Heart left ventricle (tissue), 16 donors: ENCODE measurements at regions of chr20 and their contacts with region 1.

Region 1: DNA sequence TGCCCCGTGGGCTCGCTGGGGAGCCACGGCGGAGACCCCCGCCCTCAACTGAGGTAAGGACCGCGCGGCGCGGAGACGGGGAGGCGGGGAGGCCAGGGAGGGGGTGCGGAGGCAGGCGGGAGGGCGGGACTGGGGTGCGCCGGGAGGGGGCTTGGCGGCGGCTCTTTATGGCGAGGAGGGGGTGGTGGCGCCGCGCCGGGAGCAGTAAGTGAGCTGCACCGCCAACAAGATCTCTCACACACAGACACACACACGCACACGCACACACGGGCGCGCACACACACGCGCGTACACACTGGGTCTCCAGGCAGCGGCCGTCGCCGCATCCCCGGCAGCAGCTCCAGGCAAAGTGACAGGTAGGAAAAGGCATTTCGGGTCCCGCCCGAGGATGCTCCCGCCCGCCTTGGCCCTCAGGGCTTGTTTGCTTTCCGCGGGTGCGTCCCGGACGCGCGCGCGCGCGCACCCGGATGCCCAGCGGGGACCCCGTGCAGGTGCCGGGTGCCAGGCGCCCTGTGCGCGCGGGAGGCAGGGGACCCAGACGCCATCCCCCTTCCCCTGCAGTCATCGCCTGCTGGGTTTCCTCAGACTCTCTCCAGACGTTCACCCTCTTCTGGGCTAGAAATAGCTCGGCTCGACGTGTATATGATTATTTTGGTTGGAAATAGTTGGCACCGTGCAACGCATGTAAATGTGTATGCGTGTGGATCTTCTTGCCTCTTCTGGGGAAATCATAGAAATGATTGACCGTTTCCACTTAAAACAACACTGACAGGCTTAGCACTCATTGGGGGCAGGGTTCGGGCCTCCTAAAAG is at the start of gene PLCB4:
- DNase-seq: peak; percentile 58 to 75 (median 64)
- ATAC-seq: peak in 3 of 4 donors; percentile 38 to 55 (median 41)
- H3K4me3 ChIP-seq: peak within 1 kb of the TSS; percentile 68 to 95 (median 90)
- H3K27ac ChIP-seq: peak within 1 kb of the TSS; percentile 68 to 98 (median 94)
- H3K4me1 ChIP-seq: peaks cover 0 to 50% (median 34%) of the 10 kb centered on the region in 12 donors
- H3K27me3 ChIP-seq: peaks cover 0 to 22% (median 0%) of the 10 kb centered on the region in 9 donors
- CTCF ChIP-seq: no peak
- POLR2A ChIP-seq: peak in 1 of 2 donors; percentile 38
- total RNA-seq, gene PLCB4: 14.7 to 31.8 (median 18.6) TPM

Region 2: DNA sequence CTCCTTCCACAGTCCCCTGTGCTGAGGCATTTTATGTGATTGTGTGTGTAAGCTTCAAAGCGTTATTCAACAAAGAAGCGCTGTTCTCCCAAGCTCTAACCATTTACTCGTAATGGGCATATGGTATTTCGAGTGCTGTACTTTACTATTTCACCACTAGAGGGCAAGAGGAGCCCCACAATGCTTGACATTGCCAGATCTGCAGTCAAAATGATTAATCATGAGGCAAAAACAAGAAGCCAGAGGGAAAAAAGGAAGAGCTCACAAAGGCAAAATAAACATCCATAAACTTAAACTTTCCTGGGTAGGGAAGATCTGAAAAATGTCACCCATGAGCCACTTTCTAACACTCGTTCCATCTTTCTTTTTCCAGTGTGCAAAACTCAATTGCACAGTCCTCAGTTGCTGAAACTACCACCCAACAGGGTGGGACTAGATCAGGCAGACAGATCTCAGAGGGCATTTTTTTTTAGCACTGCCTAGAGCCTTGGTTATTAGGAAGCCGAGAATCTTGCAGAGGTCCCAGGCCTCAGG is 215.2 kb before region 1 on chr20:
- intact Hi-C with region 1: loop called in 9 of 10 experiments (anchors 1 to 10 kb)
- DNase-seq: peak in 2 of 5 donors; percentile 20 to 29
- ATAC-seq: peak; percentile 56 to 86 (median 82)
- H3K4me3 ChIP-seq: peak overlapping the region in 9 of 12 donors; percentile 6 to 39 (median 21)
- H3K27ac ChIP-seq: peak overlapping the region; percentile 34 to 81 (median 70)
- H3K4me1 ChIP-seq: peaks cover 0 to 25% (median 15%) of the 10 kb centered on the region in 12 donors
- H3K27me3 ChIP-seq: no peaks in the 10 kb centered on the region
- CTCF ChIP-seq: peak; percentile 78 to 93 (median 89)
- POLR2A ChIP-seq: no peak

Region 3: GRCh38 chr20:8865636-8866035 is 203.4 kb before region 1 on chr20:
- intact Hi-C with region 1: no loop called
- DNase-seq: no peak
- ATAC-seq: no peak
- H3K4me3 ChIP-seq: no peak overlapping the region
- H3K27ac ChIP-seq: no peak overlapping the region
- H3K4me1 ChIP-seq: peaks cover 0 to 12% (median 0%) of the 10 kb centered on the region in 12 donors
- H3K27me3 ChIP-seq: no peaks in the 10 kb centered on the region
- CTCF ChIP-seq: no peak
- POLR2A ChIP-seq: no peak

Region 4: GRCh38 chr20:8996817-8997512 is 72.1 kb before region 1 on chr20:
- intact Hi-C with region 1: loop called in 1 of 10 experiments (anchors 10 kb)
- DNase-seq: no peak
- ATAC-seq: no peak
- H3K4me3 ChIP-seq: no peak overlapping the region
- H3K27ac ChIP-seq: no peak overlapping the region
- H3K4me1 ChIP-seq: peaks cover 0 to 15% (median 8%) of the 10 kb centered on the region in 12 donors
- H3K27me3 ChIP-seq: no peaks in the 10 kb centered on the region
- CTCF ChIP-seq: no peak
- POLR2A ChIP-seq: no peak

Region 5: DNA sequence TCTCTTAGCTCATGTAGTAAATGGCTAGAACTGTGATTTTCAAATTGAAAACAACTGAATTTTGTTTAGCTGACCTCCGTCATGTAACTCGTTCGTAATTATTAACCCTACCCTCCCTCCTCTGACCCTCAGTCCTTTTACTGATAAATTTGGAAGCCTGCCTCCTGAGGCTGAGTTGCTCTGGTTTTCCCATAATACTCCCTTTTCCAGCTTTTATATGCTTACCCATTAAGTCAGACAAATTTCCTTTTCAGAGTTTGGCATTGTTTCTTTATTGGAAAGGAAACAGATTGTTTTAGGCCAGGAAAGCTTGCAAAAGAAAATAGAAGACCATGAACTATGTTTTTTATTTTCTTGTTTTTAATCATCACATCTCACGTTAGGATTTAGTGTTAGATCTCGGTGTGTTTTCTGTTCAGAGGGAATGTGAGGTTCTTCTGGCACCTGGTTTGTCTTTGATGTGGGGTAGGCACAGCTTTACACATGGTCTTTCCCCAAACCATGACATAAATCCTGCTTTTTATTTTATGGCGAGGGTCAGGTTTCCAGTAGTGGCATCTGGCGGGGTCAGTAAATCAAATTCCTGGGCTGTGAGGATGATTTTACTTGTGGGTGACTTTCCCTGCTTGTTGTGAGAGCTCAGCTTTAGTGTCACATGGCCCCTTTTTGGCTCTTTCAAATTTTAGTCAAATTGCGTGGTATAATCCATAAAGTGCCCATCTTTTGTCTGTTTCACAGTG is 24.3 kb after region 1 on chr20:
- intact Hi-C with region 1: no loop called
- DNase-seq: no peak
- ATAC-seq: peak in 3 of 4 donors; percentile 46 to 80 (median 52)
- H3K4me3 ChIP-seq: peak overlapping the region in 7 of 12 donors; percentile 4 to 28 (median 14)
- H3K27ac ChIP-seq: peak overlapping the region; percentile 33 to 78 (median 66)
- H3K4me1 ChIP-seq: peaks cover 0 to 71% (median 40%) of the 10 kb centered on the region in 12 donors
- H3K27me3 ChIP-seq: no peaks in the 10 kb centered on the region
- CTCF ChIP-seq: peak in 2 of 12 donors; percentile 6 to 20
- POLR2A ChIP-seq: no peak

Region 6: DNA sequence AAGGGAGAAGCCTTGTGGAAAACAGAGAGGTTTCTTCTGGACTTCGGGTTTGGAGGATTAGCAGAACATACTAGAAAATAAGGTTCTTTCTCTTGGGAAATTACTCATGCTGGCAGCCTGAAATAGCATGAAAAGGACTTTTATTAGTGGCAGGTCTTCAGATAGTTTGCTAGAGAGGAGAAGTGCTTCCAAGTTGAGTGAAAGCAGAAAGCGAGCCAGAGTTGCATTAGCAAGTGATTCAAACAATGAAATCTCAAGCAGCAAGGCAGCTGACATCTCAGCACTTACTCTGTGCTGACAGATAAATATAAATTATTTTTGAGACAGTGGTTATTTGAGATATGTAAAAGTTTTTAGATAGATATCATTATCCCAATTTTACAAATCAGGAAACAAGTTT is 91.7 kb after region 1 on chr20:
- intact Hi-C with region 1: loop called in 3 of 10 experiments (anchors 5 to 10 kb)
- DNase-seq: no peak
- ATAC-seq: peak; percentile 47 to 71 (median 66)
- H3K4me3 ChIP-seq: peak overlapping the region in 5 of 12 donors; percentile 2 to 23 (median 12)
- H3K27ac ChIP-seq: peak overlapping the region in 11 of 12 donors; percentile 1 to 58 (median 35)
- H3K4me1 ChIP-seq: peaks cover 0 to 43% (median 19%) of the 10 kb centered on the region in 12 donors
- H3K27me3 ChIP-seq: no peaks in the 10 kb centered on the region
- CTCF ChIP-seq: no peak
- POLR2A ChIP-seq: no peak

Region 7: DNA sequence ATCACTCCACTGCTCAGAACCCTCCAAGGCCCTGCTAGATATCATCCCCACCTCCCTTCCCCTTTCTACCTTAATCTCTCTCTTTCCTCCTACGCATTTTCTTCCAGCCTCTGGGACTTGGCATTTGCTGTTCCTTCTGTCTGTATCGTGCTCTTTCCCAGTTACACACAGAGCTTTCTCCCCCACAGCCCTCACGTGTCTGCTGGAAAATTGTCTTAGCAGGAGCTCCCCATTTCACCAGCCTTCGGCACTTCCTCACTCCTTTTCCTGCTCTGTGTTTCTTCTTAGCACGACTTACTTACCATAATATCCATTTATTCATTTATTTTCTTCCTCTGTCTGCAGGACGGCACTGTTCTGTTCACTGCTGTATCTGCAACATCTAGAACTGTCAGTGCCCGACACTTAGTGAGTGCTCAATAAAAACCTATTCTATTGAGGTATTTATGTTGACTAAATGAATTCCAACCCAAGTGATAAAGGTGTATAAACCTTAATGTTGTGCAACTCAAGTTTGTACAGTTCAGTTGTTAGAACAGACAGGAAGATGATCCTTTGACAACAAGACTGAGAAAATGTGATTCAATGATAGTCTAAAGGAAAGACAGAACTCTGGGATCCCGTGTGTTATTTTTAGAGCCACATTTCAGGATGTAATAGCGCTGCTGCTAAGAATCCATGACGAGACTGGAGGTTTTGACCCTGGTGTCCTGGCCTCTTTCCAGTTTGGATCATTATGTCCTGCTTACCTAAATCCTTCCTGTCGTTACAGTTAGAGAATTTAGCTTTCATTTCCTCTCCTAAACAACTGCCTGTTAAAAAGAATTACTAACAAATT is 275.2 kb after region 1 on chr20:
- intact Hi-C with region 1: loop called in 1 of 10 experiments (anchors 10 kb)
- DNase-seq: peak in 3 of 5 donors; percentile 38 to 63 (median 62)
- ATAC-seq: peak; percentile 68 to 88 (median 76)
- H3K4me3 ChIP-seq: peak overlapping the region in 1 of 12 donors; percentile 3
- H3K27ac ChIP-seq: peak overlapping the region in 11 of 12 donors; percentile 28 to 64 (median 50)
- H3K4me1 ChIP-seq: peaks cover 0 to 45% (median 31%) of the 10 kb centered on the region in 12 donors
- H3K27me3 ChIP-seq: no peaks in the 10 kb centered on the region
- CTCF ChIP-seq: no peak
- POLR2A ChIP-seq: no peak